ENCODE measurements at regions of chr1 and their contacts with region 1.

Region 1: DNA sequence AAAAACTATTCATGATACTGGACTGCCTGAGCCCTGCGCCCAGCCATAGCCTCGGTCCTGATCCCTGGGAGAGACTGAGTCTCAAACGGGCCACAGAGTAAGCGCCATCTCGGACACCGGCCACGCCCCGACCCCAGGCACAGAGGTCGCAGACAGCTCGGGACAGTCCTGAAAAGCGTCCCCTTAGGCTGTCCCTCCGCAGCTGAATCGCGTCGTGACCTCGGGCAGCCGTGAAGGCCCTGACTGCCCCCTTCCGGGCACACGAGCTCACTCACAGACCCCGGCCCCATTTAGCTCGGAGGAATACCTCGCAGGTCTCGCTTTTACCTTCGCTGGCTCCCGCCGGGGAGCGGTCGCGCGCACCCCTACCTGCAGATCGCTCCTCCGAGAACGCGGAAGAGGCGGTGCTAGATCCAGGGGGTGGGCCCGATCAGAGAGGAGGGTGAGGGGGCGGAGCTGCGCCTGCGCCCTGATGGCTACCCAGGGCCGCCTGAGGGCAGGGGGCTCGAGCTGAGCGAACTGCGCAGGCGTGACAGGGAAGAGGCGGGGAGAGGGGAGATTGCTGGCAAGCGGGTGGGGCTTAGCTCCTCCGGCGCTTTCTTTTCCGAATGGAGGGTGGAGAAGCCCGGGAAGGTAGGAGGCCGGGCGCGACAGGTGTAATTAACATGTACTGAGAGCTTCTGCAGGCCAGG is at the start of gene MKNK1:
- DNase-seq: peak; percentile 100
- H3K4me3 ChIP-seq: peak within 1 kb of the TSS; percentile 78 to 99
- H3K27ac ChIP-seq: peak within 1 kb of the TSS in 1 of 2 experiments; percentile 67; a peak in 1 of 4 replicates
- H3K4me1 ChIP-seq: peaks cover 0 to 12% of the 10 kb centered on the region in 2 experiments; a peak in 1 of 4 replicates
- H3K27me3 ChIP-seq: no peaks in the 10 kb centered on the region
- CTCF ChIP-seq: peak; percentile 37
- EP300 ChIP-seq: no peak
- RAD21 ChIP-seq: no peak
- polyA plus RNA-seq, gene MKNK1: 28.2 and 29.6 TPM in 2 replicates

Region 2: DNA sequence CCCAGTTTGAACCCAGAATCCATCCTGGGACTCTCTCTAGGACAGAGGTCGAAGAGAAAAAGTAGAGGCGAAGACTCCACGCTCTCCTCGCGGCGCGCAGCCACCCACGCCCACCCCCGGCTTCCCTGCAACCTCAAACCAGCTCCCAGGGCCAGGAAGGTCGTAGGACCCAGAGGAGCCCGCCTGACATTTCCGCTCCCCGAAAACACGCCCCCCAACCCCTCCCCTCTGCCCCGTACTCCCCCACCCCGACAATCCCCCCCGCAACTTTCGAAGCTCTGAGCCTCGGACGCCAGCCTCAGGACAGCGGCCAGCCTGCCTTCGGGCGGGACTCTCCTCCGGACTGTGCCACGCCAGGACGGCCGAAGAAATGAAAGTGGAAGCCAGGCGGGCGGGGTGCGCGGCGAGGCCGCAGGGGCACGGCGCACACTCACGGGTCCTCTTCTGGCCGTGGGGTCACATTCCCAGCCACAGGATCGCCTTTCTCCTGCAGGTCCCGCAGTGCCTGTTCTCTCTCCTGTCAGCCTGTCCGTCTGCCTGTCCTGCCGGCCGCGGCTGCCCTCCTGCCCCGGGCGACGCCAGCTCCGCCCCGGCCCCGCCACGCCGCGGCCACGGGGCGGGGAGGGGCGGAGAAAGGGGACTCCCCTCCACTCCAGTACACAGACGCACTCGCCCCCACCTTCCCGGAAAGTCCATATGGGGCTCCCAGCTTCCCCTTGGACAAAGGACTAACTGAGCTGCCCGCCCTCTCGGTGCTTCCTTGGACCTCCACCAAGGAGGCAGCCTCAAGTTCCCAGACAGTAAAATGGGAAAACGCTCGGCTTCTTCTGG is 12.5 kb after region 1 on chr1 and contains the start of gene MOB3C:
- CTCF ChIA-PET with region 1: interaction called, 36 read pairs
- POLR2A ChIA-PET with region 1: interaction called, 9 read pairs
- DNase-seq: peak; percentile 89
- H3K4me3 ChIP-seq: peak within 1 kb of the TSS; percentile 69 to 78
- H3K27ac ChIP-seq: peak within 1 kb of the TSS; percentile 77 to 78; a peak in 3 of 4 replicates
- H3K4me1 ChIP-seq: peaks cover 8 to 25% of the 10 kb centered on the region in 2 experiments; a peak in 2 of 4 replicates
- H3K27me3 ChIP-seq: no peaks in the 10 kb centered on the region
- CTCF ChIP-seq: no peak
- EP300 ChIP-seq: no peak
- RAD21 ChIP-seq: no peak
- polyA plus RNA-seq, gene MOB3C: 8.6 and 10.6 TPM in 2 replicates

Region 3: DNA sequence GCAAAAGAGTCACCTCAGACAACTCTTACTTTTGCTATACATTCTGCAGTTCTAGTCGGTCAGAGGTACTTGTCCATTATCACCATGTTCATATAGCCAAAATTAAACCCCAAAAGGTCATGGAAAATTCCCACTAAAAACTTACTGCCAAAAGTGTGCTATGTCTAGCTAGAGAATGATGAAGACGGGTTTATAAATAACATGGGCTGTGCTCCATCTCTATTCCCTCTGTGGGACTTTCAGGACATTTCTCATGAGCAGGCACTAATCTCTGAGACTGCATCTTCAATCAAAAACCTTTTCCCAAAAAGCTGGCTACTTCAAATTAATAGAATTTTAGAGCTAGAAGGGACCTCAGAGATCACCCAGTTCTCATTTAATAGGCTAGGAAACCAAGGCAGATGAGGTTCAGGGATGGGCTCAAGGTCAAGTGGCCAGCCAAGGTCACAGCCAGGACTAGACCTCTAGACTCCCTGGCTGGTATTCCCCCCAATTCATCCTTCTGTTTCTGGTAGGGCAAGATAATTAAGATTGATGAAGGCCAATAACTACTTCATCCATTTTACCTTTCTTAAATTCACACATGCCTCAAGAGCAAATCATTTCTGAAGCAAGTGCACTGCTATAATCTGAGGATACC is 33.6 kb after region 1 on chr1:
- CTCF ChIA-PET with region 1: no interaction called
- POLR2A ChIA-PET with region 1: no interaction called
- DNase-seq: no peak
- H3K4me3 ChIP-seq: no peak overlapping the region
- H3K27ac ChIP-seq: no peak overlapping the region
- H3K4me1 ChIP-seq: peaks cover 0 to under 1% of the 10 kb centered on the region in 2 experiments; a peak in 2 of 4 replicates
- H3K27me3 ChIP-seq: no peaks in the 10 kb centered on the region
- CTCF ChIP-seq: no peak
- EP300 ChIP-seq: no peak
- RAD21 ChIP-seq: no peak

Measured in SK-N-SH (cell line).